Activated naive CD4-positive, alpha-beta T cell treated with anti-CD3 and anti-CD28 coated beads, Interleukin-2, amount 10 ng/mL, durations not matched to agents 7 days and 5 days (primary cell): ENCODE measurements at regions of chr1 and their contacts with region 1.

Region 1: DNA sequence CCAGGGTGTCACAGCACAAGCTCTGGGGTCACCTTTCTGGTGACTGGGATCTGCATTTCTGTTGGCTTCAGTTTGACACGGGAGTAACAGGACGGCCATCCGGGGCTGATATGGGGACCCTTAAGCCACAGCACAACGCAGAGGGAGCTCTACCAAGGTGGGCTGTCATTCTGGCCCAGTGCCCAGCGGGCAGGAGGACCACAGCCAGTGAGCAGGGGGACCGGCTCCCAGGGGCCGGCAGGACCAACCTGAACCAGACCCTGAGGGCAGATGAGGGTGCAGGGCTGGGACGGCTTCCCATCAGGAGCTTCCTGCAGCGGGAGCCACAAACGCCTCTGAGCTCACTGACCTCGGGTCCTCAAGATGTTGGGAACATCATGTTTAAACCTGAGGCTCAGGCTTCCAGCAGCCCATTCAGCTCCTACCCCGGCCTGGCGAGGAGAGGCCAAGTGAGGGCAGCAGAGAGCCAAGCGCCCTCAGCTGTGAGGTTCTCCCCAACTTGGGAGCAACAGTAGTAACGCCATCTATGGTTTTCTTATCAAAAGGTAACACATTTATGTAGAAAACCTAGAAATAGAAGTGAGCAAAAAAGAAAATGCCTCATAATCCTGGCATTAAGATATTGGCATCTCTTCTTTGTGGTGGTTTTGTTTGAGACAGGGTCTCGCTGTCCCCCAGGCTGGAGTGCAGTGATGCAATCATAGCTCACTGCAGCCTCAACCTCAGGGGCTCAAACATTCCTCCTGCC is 26.8 kb downstream of the TMEM201 start:
- DNase-seq: peak; percentile 79
- H3K4me3 Mint-ChIP-seq: no peak overlapping the region
- H3K27ac Mint-ChIP-seq: no peak overlapping the region
- H3K4me1 Mint-ChIP-seq: no peaks in the 10 kb centered on the region
- H3K27me3 Mint-ChIP-seq: peaks cover 17% of the 10 kb centered on the region

Region 2: GRCh38 chr1:9338397-9339246 is 276.9 kb before region 1 on chr1:
- CTCF ChIA-PET with region 1: no interaction called
- DNase-seq: no peak
- H3K4me3 Mint-ChIP-seq: no peak overlapping the region
- H3K27ac Mint-ChIP-seq: no peak overlapping the region
- H3K4me1 Mint-ChIP-seq: no peaks in the 10 kb centered on the region
- H3K27me3 Mint-ChIP-seq: peaks cover 3% of the 10 kb centered on the region

Region 3: GRCh38 chr1:9588551-9589143 is 26.8 kb before region 1 on chr1 and contains the start of gene TMEM201:
- CTCF ChIA-PET with region 1: interaction called, 10 read pairs
- DNase-seq: peak; percentile 93
- H3K4me3 Mint-ChIP-seq: peak within 1 kb of the TSS; percentile 83
- H3K27ac Mint-ChIP-seq: peak within 1 kb of the TSS; percentile 89
- H3K4me1 Mint-ChIP-seq: peaks cover 40% of the 10 kb centered on the region
- H3K27me3 Mint-ChIP-seq: no peaks in the 10 kb centered on the region

Region 4: DNA sequence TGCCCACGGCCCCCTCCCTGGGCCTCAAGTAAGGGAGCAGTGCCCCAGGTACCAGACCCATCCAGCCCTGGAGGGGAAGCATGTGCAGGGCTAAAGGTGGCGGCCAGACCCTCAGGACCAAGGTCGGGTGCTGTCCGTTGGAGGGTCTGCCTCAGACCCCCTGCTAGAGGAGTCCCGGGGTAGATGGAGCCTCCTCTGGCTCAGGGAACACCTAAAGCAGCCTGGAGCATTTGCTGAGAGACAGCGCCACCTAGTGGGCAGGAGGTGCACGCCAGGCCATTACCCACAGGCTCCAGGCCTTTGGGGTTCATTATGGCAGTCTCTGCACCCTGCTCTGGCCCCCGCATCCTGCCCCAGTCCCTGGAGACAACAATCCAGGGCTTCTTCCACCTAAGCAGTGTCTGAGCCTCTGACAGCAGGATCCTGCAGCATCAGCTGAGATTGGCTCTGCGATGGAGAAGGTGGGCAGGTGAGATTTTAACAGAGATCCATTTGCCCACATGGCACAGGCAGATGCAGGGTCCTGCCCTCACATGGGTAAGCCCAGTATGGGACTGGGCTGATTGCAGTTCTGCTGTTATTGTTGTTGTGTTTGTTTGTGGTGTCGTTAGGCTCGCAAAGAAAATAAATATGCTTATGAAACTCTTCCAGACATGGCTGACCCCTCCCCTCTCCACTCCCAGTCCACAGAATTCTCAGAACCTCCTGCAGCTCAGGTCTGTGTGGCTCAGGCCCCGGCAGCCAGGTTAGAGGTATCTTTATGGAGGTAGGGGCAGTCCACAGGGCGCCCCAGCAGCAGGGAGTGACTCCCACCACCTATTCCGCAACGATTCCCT is 252.1 kb after region 1 on chr1:
- CTCF ChIA-PET with region 1: interaction called, 12 read pairs
- DNase-seq: peak; percentile 92
- H3K4me3 Mint-ChIP-seq: no peak overlapping the region
- H3K27ac Mint-ChIP-seq: no peak overlapping the region
- H3K4me1 Mint-ChIP-seq: peaks cover 12% of the 10 kb centered on the region
- H3K27me3 Mint-ChIP-seq: peaks cover under 1% of the 10 kb centered on the region